ENCODE measurements at regions of chr19 and their contacts with region 1.

Region 1: DNA sequence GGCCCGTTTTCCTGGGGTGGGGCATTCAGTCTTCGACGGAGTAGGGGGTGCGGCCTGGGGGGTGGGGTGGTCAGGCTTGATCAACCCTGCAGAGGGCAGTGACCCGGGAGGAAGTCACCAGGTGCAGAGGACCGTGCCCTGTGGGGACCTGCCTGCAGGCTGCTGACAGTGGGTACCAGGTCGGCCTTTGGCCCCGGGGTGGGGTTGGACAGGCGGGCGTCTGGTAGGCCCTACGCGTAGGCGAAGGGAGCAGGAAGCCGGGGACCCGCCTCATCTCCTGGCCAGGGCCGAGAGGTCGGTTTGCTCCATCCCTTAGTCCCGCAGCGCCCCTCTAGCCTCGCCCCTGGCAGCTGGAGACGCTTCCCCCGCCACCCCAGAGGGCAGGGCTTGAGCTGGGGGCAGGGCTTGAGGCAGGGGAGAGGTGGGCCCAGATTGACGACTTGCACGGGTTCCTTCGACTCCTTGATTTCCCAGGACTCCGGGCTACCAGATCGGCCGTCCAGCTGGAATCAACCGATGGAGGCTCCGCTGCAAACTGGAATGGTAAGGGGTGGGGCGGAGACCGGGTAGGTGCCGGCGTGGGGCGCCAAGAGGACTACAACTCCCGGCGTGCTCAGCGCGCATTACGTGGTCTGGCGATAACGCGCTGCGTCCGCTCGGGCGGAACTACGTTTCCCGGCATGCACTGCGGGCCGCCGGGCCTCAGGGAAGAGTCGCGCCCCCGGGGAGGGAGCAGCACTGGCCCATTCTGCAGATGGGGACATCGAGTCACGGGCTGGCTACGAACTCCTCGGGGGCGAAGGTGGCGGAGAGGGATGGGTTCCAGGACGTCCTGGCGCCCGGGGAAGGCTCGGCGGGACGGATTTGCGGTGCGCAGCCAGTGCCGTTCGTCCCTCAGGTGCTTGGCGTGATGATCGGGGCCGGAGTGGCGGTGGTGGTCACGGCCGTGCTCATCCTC is at the start of gene PNPLA6:
- DNase-seq: peak; percentile 96
- ATAC-seq: peak; percentile 80
- H3K4me3 Mint-ChIP-seq: peak within 1 kb of the TSS; percentile 97
- H3K27ac Mint-ChIP-seq: peak within 1 kb of the TSS; percentile 99
- H3K4me1 Mint-ChIP-seq: peaks cover 4% of the 10 kb centered on the region; the same call in 1 of the 2 replicates
- H3K27me3 Mint-ChIP-seq: no peaks in the 10 kb centered on the region
- CTCF ChIP-seq: no peak
- total RNA-seq, gene PNPLA6: 149 to 156 TPM (median 150 TPM) in 3 replicates

Region 2: DNA sequence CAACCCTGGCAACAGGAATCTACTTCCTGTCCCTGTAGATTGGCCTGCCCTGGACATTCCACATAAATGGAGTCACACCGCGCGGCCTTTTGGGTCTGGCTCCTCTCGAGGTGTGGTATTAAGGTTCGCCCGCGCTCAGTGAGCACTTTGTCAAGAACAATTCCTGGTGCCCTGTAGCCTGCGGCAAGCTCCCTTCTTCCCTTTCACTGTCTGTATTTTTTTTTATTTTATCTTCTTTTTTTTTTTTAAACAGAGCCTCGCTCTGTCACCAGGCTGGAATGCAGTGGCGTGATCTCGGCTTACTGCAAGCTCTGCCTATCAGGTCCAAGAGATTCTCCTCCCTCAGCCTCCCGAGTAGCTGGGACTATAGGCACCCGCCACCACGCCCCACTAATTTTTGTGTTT is 74.8 kb before region 1 on chr19:
- CTCF ChIA-PET with region 1: interaction called, 11 read pairs
- POLR2A ChIA-PET with region 1: no interaction called
- DNase-seq: no peak
- ATAC-seq: no peak
- H3K4me3 Mint-ChIP-seq: no peak overlapping the region
- H3K27ac Mint-ChIP-seq: no peak overlapping the region
- H3K4me1 Mint-ChIP-seq: no peaks in the 10 kb centered on the region
- H3K27me3 Mint-ChIP-seq: no peaks in the 10 kb centered on the region; the same call in 1 of the 2 replicates
- CTCF ChIP-seq: no peak

Region 3: DNA sequence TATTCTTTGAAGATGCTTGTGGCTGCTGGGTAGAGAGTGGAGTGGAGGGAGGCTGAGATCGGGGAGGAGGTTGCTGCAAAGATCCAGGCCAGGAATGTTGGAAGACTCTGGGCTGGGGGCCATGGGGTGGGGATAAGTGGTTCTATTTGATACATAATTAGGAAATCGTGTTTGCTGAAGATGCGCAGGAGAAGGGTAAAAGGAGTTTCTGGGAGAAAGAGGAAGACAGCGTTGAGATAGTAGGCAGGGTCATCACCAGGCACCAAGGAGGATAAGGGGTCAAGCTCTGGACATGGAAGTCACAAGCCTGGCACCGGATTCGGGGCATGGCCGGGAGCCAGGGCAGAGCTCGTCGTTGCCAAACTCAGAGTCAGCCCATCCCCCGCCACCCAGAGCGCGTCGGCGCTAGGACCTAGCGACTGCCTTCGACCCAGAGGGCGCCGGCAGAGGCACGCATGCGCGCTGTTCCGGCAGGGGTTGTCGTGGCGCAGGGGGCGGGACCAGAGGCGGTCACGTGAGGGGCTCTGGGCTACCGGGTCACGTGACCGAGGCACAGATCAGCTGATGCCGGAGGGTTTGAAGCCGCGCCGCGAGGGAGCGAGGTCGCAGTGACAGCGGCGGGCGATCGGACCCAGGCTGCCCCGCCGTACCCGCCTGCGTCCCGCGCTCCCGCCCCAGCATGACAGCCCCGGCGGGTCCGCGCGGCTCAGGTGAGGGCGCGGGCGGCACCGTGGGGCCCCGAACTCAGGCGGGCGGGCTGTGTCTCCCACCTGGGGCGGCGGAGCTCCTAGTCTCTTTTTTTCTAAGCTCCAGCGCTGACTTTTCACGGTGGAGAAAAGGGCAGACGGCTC is 13.0 kb before region 1 on chr19 and contains the start of gene MCOLN1:
- CTCF ChIA-PET with region 1: interaction called, 7 read pairs
- POLR2A ChIA-PET with region 1: interaction called, 16 read pairs
- DNase-seq: peak; percentile 100
- ATAC-seq: peak; percentile 91
- H3K4me3 Mint-ChIP-seq: peak within 1 kb of the TSS; percentile 77
- H3K27ac Mint-ChIP-seq: peak within 1 kb of the TSS; percentile 21
- H3K4me1 Mint-ChIP-seq: peaks cover 9% of the 10 kb centered on the region; the same call in 1 of the 2 replicates
- H3K27me3 Mint-ChIP-seq: no peaks in the 10 kb centered on the region; the same call in 1 of the 2 replicates
- CTCF ChIP-seq: no peak
- total RNA-seq, gene MCOLN1: 15.0 to 19.7 TPM (median 16.7 TPM) in 3 replicates

Measured in WTC11 (cell line).